ENCODE measurements at regions of chr16 and their contacts with region 1.

Region 1: DNA sequence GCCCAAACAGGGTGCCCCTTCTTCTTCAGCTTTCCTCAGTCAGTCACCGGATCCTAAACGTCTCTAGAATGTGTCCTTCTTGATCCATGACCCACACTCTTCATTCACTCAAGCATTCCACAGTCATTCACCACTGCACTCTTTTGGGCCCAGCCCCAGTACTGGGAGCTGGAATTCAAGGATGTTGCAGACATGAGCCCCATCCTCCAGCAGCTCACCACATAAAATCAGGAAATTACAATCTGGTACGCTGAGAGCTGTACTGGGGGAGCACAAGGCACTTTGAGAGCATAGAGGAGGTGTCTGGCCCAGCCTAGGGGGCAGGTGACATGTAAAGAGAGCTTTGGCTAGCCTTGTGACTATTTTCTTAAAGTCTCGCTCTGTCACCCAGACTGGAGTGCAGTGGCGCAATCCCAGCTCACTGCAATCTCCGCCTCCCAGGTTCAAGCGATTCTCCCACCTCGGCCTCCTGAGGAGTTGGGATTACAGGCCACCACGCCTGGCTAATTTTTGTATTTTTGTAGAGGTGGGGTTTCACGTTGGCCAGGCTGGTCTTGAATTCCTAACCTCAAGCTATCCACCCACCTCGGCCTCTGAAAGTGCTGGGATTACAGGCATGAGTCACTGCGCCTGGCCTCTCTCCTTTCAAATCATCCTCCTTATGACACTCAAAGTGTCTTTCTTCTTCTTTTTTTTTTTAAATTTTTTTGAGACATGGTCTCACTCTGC is 18.7 kb downstream of the CES4A start:
- DNase-seq: no peak
- H3K4me3 Mint-ChIP-seq: no peak overlapping the region
- H3K27ac Mint-ChIP-seq: no peak overlapping the region
- H3K4me1 Mint-ChIP-seq: peaks cover 44% of the 10 kb centered on the region
- H3K27me3 Mint-ChIP-seq: peaks cover 5% of the 10 kb centered on the region

Region 2: GRCh38 chr16:66991545-66992077 is 15.5 kb before region 1 on chr16:
- CTCF ChIA-PET with region 1: interaction called, 10 read pairs
- DNase-seq: no peak
- H3K4me3 Mint-ChIP-seq: no peak overlapping the region
- H3K27ac Mint-ChIP-seq: peak overlapping the region; percentile 45
- H3K4me1 Mint-ChIP-seq: peaks cover 28% of the 10 kb centered on the region
- H3K27me3 Mint-ChIP-seq: no peaks in the 10 kb centered on the region

Region 3: DNA sequence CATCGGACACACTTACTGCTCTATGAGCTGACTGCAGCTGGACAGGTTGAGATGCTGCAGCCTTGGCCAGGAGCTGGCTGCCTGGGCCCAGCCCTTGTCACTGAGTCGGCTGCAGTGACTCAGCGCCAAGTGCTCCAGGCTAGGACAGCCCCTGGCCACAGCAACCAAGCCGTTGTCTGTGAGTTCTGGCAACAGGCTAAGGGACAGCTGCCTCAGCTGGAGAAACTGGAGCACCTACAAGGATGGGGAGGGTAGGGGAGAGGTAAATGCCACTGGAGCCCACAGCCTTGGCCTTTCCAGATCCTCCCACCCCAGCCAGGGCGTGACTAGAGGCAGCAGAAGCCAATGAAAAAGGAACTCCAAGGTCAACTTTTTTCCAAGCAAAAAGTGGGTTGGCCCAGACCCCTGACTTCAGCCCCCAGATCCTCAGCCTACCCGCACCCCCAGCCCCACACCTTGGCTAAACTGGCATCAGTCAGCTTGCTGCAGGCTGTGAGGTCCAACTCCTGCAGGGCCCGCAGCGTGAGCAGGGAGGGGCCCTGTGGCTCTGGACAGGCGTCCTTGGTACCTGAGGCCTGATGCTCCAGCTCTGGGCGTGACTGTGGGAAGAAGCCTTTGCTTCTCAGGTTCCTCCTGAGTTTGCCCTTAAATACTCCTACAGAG is 200.9 kb after region 1 on chr16:
- CTCF ChIA-PET with region 1: no interaction called
- DNase-seq: no peak
- H3K4me3 Mint-ChIP-seq: no peak overlapping the region
- H3K27ac Mint-ChIP-seq: no peak overlapping the region
- H3K4me1 Mint-ChIP-seq: no peaks in the 10 kb centered on the region
- H3K27me3 Mint-ChIP-seq: peaks cover 3% of the 10 kb centered on the region

Measured in activated naive CD4-positive, alpha-beta T cell treated with anti-CD3 and anti-CD28 coated beads, Interleukin-2, amount 10 ng/mL, durations not matched to agents 7 days and 5 days (primary cell).